ENCODE measurements at regions of chr11 and their contacts with region 1.

Region 1: DNA sequence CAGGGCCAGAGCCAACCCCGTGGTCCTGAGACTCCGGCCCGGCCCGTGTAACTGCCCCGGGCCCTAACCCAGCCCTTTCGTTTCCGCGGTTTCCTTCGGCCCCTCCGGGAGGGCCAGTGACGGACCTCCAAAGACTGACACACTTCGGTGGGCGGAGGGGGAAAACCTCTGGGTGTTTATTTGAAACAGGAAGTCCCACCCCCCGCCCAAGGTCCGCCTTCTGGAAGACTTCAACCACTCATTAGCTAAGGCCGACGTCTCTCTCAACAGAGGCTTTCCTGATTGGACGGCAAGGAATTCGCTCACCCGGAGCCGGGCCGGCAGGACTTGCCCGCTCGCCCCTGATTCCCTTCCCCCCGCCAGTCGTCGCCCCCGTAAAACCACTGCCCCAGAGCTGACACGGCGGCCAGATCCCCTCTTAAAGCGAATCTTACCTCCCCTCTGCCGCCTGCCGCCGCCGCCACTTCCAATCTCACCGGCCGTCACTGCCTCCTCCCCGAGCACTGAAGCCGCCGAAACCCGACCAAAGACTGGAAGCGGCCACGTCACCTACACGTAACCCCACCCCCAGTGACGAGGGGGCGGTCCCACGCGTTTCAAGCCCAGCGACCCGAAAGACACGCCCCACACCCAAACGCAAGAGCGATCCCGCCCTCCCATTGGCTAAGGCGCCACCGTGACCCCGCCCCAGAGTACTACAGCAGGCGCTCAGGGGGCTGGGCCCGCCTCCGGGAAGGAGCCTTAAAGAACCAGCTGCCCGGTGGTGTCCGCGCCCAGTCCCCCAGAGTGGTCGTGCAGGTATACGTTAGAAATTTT is at the start of gene STX5:
- DNase-seq: peak; percentile 100
- ATAC-seq: peak; percentile 95
- H3K4me3 Mint-ChIP-seq: peak within 1 kb of the TSS; percentile 88
- H3K27ac Mint-ChIP-seq: peak within 1 kb of the TSS; percentile 95
- H3K4me1 Mint-ChIP-seq: peaks cover 47% of the 10 kb centered on the region
- H3K27me3 Mint-ChIP-seq: no peaks in the 10 kb centered on the region
- CTCF ChIP-seq: no peak
- total RNA-seq, gene STX5: 22.0 to 22.8 TPM

Region 2: GRCh38 chr11:62792202-62792575 is 39.5 kb before region 1 on chr11:
- CTCF ChIA-PET with region 1: interaction called, 34 read pairs
- POLR2A ChIA-PET with region 1: interaction called, 38 read pairs
- intact Hi-C with region 1: loop called (anchors 5 kb)
- DNase-seq: peak; percentile 31
- ATAC-seq: peak; percentile 12
- H3K4me3 Mint-ChIP-seq: peak overlapping the region; percentile 91
- H3K27ac Mint-ChIP-seq: peak overlapping the region; percentile 91
- H3K4me1 Mint-ChIP-seq: peaks cover 41% of the 10 kb centered on the region
- H3K27me3 Mint-ChIP-seq: no peaks in the 10 kb centered on the region
- CTCF ChIP-seq: no peak

Region 3: GRCh38 chr11:62816557-62816956 is 15.2 kb before region 1 on chr11:
- CTCF ChIA-PET with region 1: interaction called, 12 read pairs
- POLR2A ChIA-PET with region 1: interaction called, 19 read pairs
- intact Hi-C with region 1: no loop called
- DNase-seq: no peak
- ATAC-seq: no peak
- H3K4me3 Mint-ChIP-seq: no peak overlapping the region
- H3K27ac Mint-ChIP-seq: no peak overlapping the region
- H3K4me1 Mint-ChIP-seq: peaks cover 2% of the 10 kb centered on the region
- H3K27me3 Mint-ChIP-seq: no peaks in the 10 kb centered on the region
- CTCF ChIP-seq: no peak